ENCODE measurements at regions of chr4 and their contacts with region 1.

Region 1: DNA sequence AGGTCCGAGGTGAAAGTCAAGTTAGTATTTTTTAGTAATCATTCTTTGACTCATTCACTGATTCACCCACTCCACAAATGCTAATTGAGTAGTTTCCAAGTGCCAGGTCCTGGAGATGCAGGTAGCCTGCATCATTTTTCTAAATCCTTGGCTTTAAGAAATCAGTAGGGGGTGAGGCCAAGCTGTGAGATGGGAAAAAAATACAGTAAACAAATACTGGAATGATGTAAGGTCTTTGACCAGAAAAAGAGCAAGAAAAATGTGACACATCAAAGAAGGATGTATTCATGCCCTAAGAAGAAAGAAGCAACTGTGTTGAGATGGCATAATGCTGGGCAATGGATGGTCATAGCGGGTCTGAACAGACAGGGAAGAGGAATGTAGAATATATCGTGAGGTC is 1386.6 kb downstream of the PCDH7 start:
- DNase-seq: no peak
- ATAC-seq: no peak
- H3K4me3 ChIP-seq: no peak overlapping the region
- H3K27ac ChIP-seq: no peak overlapping the region
- H3K4me1 ChIP-seq: no peaks in the 10 kb centered on the region
- H3K27me3 ChIP-seq: no peaks in the 10 kb centered on the region
- CTCF ChIP-seq: no peak
- EP300 ChIP-seq: no peak
- POLR2A ChIP-seq: no peak
- RAD21 ChIP-seq: no peak

Region 2: DNA sequence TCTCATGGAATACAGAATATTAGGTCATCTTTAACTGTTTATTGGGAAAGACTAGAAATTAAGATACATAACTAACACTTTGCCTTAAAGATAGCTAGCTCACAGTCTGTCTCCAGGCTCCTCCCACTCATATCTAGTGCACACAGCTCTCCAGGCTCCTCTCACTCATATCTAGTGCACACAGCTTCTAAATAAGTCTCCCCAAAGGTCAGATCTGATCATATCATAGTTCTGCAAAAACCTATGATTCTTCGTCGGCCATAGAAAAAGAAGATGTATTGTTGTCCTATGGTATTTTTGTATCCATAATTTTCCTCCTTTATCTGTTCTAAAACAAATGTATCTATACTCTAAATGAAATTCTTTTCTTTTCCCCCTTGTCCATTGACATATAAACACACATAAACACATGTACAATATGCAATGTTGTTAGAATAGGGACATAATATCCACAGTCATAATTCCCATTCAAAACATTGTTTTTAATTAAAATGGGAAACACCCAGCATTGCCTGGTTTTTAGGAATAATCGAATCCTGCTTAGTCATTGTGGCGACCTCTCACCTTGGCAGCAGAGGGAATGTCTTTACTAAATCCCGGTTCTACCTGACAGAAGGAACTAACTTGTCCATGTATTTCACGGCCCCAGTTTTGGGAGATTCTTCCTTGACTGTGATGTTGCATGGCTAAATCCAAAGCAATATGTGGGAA is 104.6 kb before region 1 on chr4:
- CTCF ChIA-PET with region 1: no interaction called
- POLR2A ChIA-PET with region 1: no interaction called
- in situ Hi-C with region 1: no loop called
- intact Hi-C with region 1: loop called (anchors 10 kb)
- DNase-seq: peak; percentile 35 to 85 (median 56)
- ATAC-seq: peak; percentile 82
- H3K4me3 ChIP-seq: no peak overlapping the region
- H3K27ac ChIP-seq: peak overlapping the region; percentile 30; the same call in 1 of the 3 replicates
- H3K4me1 ChIP-seq: peaks cover 0 to 10% of the 10 kb centered on the region in 2 experiments; a peak in 2 of 5 replicates
- H3K27me3 ChIP-seq: no peaks in the 10 kb centered on the region
- CTCF ChIP-seq: no peak
- EP300 ChIP-seq: peak; percentile 92
- POLR2A ChIP-seq: no peak
- RAD21 ChIP-seq: no peak

Region 3: GRCh38 chr4:32032136-32032672 is 74.6 kb before region 1 on chr4:
- CTCF ChIA-PET with region 1: no interaction called
- POLR2A ChIA-PET with region 1: no interaction called
- in situ Hi-C with region 1: no loop called
- intact Hi-C with region 1: no loop called
- DNase-seq: no peak
- ATAC-seq: no peak
- H3K4me3 ChIP-seq: no peak overlapping the region
- H3K27ac ChIP-seq: no peak overlapping the region
- H3K4me1 ChIP-seq: no peaks in the 10 kb centered on the region
- H3K27me3 ChIP-seq: no peaks in the 10 kb centered on the region
- CTCF ChIP-seq: no peak
- EP300 ChIP-seq: no peak
- POLR2A ChIP-seq: no peak
- RAD21 ChIP-seq: no peak

Measured in K562 (cell line).